ENCODE measurements at regions of chr15 and their contacts with region 1.

Region 1: GRCh38 chr15:27527490-27528067 is 556.6 kb downstream of the GABRG3 start:
- DNase-seq: no peak
- H3K4me3 ChIP-seq: no peak overlapping the region
- H3K27ac ChIP-seq: no peak overlapping the region
- H3K4me1 ChIP-seq: no peaks in the 10 kb centered on the region
- CTCF ChIP-seq: no peak

Region 2: DNA sequence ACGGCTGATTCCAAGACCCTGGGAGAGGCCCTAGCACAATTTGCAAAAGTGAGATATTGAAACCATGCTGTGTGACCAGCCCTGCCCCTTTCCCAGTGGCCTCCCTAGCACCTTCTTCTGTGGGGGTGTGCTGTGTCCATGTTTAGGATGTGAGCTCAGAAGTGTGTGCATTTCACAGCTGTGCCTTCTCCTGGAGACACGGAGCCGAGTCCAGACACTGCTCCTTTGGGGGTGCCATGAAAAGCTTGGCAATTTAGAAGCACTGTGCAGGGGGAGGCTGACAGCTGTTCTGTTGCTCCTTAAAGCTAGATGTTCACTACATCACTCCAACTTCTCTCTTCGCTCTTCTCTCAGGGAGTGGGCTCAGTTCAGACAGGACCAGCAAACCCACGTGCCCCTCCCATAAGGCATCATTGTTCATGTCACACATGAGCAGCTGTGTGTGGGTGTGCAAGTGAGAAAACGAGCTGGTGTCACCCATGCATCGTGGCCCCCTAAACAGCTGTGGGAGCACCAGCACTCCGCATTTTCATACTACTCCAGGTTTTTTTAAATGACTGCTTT is 64.0 kb before region 1 on chr15:
- CTCF ChIA-PET with region 1: no interaction called
- POLR2A ChIA-PET with region 1: no interaction called
- intact Hi-C with region 1: loop called (anchors 10 kb)
- DNase-seq: no peak
- H3K4me3 ChIP-seq: no peak overlapping the region
- H3K27ac ChIP-seq: no peak overlapping the region
- H3K4me1 ChIP-seq: no peaks in the 10 kb centered on the region
- CTCF ChIP-seq: no peak

Region 3: GRCh38 chr15:27902680-27903385 is 375.3 kb after region 1 on chr15:
- CTCF ChIA-PET with region 1: no interaction called
- POLR2A ChIA-PET with region 1: no interaction called
- intact Hi-C with region 1: no loop called
- DNase-seq: no peak
- H3K4me3 ChIP-seq: no peak overlapping the region
- H3K27ac ChIP-seq: no peak overlapping the region
- H3K4me1 ChIP-seq: no peaks in the 10 kb centered on the region
- CTCF ChIP-seq: no peak